Colonic mucosa (tissue), 4 donors: ENCODE measurements at regions of chr6 and their contacts with region 1.

Region 1: GRCh38 chr6:143940011-143940597 is 68.0 kb downstream of the PLAGL1 start:
- DNase-seq: peak; percentile 63
- H3K4me3 ChIP-seq: no peak overlapping the region
- H3K27ac ChIP-seq: no peak overlapping the region
- H3K4me1 ChIP-seq: no peaks in the 10 kb centered on the region
- H3K27me3 ChIP-seq: no peaks in the 10 kb centered on the region
- CTCF ChIP-seq: peak; percentile 81

Region 2: DNA sequence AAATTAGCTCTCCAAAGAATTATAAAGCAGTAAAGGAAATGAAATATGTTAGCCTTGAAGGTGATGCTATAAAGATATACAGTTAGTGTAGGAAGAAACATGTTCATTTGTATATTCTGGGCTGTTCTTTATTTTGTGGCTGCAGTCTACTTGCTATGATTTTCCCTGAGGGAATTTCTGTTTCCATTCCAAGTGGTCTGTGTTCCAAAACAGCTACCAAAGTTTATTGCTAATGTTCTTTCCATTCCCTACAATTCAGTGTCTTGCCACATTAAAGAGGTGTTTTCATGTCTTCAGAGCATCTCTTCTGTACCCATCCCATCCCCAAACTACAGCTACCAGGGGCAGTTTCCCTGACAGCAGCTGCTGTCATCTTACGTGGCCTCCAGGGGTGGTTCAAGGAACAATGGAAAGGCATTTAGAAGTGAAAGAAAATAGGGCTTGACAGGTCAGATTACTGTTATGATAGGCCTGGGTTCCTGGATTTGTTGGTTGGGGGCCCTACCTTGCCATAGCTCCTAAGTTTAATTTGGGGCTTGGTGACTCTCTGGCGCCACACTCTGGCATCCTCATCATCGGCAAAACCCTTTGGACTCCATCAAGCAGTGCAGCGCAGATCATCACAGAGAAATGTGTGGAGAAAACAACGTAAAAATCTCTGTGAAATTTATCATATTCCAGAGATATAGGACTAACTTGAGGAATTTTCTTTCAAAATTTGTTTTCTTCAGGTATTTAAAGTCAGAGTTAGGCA is 913.2 kb before region 1 on chr6:
- intact Hi-C with region 1: no loop called
- DNase-seq: peak; percentile 33
- H3K4me3 ChIP-seq: no peak overlapping the region
- H3K27ac ChIP-seq: no peak overlapping the region
- H3K4me1 ChIP-seq: no peaks in the 10 kb centered on the region
- H3K27me3 ChIP-seq: no peaks in the 10 kb centered on the region
- CTCF ChIP-seq: peak; percentile 35

Region 3: GRCh38 chr6:143570147-143570853 is 369.8 kb before region 1 on chr6:
- intact Hi-C with region 1: loop called (anchors 5 kb)
- DNase-seq: no peak
- H3K4me3 ChIP-seq: no peak overlapping the region
- H3K27ac ChIP-seq: no peak overlapping the region
- H3K4me1 ChIP-seq: no peaks in the 10 kb centered on the region
- H3K27me3 ChIP-seq: no peaks in the 10 kb centered on the region
- CTCF ChIP-seq: no peak

Region 4: GRCh38 chr6:144013486-144013909 is 73.4 kb after region 1 on chr6:
- intact Hi-C with region 1: loop called (anchors 5 kb)
- DNase-seq: peak; percentile 84
- H3K4me3 ChIP-seq: no peak overlapping the region
- H3K27ac ChIP-seq: no peak overlapping the region
- H3K4me1 ChIP-seq: peaks cover 3% of the 10 kb centered on the region
- H3K27me3 ChIP-seq: no peaks in the 10 kb centered on the region
- CTCF ChIP-seq: peak; percentile 86

Region 5: DNA sequence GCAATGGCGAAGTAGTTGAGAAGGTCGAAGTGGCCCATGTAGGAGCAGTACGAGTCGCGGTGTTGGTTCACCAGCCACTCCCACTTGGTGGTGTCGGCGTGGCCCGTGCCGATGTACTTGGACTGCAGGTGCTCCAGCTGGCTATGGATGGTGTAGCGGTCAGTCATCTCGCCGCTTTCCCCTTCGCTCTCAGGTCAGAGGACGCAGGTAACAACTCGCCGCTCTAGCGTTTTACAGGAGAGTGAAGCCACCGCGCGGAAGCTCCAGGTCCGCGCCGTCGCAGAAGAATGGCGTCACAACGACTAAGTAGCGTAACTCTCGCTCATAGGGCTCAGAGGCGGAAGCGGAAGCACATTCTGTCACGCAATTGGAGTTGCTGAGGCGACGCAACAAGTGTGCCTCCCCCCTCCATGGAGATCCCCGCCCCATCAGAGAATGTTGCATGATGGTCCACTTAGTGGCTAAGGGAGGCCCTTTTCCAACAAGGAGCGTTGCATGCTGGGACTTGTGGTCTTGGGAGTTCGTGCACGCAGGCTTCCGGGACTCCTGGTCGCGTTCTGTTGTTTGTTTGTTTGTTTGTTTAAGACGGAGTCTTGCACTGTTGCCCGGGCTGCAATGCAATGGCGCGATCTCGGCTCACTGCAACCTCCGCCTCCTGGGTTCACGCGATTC is 155.4 kb after region 1 on chr6 and contains the start of gene SF3B5:
- intact Hi-C with region 1: loop called (anchors 10 kb)
- DNase-seq: peak; percentile 99
- H3K4me3 ChIP-seq: peak within 1 kb of the TSS; percentile 91
- H3K27ac ChIP-seq: peak within 1 kb of the TSS; percentile 87
- H3K4me1 ChIP-seq: peaks cover 13% of the 10 kb centered on the region
- H3K27me3 ChIP-seq: no peaks in the 10 kb centered on the region
- CTCF ChIP-seq: no peak
- total RNA-seq, gene SF3B5: 149 to 285 TPM